Psoas muscle (tissue), 8 donors: ENCODE measurements at regions of chr12 and their contacts with region 1.

Region 1: DNA sequence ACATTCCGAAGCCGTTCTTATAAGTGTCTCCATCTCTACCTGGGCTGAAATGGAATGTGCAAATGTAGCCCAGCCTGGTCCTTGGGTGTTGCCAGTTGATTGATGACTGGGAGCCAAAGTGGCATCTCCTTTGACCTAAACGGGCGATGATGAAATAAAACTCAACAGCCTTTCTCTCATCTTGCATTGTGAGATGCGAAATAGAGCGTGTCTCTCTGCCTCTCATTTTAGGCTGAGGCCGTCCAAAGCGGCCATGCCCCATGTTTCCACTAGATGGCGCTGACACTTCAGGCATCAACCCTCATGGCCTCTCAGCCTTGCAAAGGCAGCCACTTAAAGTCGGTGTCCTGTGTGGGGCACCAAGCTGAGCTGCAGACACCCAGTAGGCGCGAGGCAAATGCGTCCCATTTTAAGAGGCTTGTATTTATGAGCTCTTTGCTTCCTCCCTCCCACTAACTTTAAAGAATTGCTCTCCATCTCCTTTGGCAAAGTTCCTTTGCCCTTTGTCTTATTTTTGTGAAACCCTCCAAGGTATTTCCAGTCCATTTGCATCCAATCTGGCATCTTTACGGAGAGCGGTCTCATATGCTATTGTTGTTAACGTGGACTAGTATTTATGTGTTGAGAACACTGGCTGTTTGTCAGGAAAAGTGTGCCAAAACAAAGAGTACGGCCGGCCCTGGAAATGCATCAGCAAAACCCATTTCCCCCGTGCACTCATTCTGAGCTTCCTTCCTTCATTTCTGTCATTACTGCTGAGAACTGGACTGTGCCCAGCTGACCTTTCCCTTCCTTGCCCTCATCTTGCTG is 25.0 kb downstream of the GPRC5A start:
- DNase-seq: peak; percentile 81 to 89
- ATAC-seq: peak; percentile 88 to 97 (median 90)
- H3K4me3 ChIP-seq: peak overlapping the region; percentile 8
- H3K27ac ChIP-seq: peak overlapping the region; percentile 30
- H3K4me1 ChIP-seq: no peaks in the 10 kb centered on the region
- H3K27me3 ChIP-seq: no peaks in the 10 kb centered on the region
- CTCF ChIP-seq: peak; percentile 99

Region 2: GRCh38 chr12:12725546-12726302 is 190.6 kb before region 1 on chr12:
- intact Hi-C with region 1: no loop called
- DNase-seq: peak; percentile 84 to 90
- ATAC-seq: peak; percentile 60 to 75 (median 64)
- H3K4me3 ChIP-seq: peak overlapping the region; percentile 84
- H3K27ac ChIP-seq: peak overlapping the region; percentile 93
- H3K4me1 ChIP-seq: peaks cover 27% of the 10 kb centered on the region
- H3K27me3 ChIP-seq: no peaks in the 10 kb centered on the region
- CTCF ChIP-seq: no peak

Region 3: DNA sequence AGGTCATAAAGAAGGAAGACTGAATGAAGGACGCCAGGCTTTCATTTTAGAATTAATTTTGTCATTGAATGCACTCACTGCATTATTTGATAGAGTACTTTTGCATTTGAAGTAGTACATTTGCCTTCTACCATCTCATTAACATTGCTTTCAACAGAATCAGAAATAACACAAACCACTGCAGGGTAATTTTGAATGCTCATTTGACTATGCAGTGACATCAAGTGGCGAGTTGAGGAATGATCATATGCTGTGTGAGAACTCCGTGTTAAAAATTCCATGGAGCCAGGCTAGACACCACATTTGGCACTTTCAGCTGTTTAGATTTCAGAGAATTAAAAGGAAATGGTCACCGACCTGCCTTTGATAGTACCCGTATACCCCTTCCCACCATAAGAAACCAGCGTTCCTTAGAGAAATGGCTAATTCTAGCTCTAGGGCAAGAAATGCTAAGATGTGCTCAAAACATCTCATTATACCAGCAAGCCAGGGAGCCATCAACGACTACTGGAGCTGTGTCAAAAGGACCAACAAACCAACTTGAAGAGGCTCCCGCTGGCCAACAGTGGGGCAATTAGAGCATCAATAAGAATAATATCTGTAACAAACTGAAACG is 67.2 kb after region 1 on chr12:
- intact Hi-C with region 1: loop called (anchors 1 to 2 kb)
- DNase-seq: no peak
- ATAC-seq: peak; percentile 59 to 88 (median 65)
- H3K4me3 ChIP-seq: no peak overlapping the region
- H3K27ac ChIP-seq: no peak overlapping the region
- H3K4me1 ChIP-seq: no peaks in the 10 kb centered on the region
- H3K27me3 ChIP-seq: no peaks in the 10 kb centered on the region
- CTCF ChIP-seq: peak; percentile 56

Region 4: DNA sequence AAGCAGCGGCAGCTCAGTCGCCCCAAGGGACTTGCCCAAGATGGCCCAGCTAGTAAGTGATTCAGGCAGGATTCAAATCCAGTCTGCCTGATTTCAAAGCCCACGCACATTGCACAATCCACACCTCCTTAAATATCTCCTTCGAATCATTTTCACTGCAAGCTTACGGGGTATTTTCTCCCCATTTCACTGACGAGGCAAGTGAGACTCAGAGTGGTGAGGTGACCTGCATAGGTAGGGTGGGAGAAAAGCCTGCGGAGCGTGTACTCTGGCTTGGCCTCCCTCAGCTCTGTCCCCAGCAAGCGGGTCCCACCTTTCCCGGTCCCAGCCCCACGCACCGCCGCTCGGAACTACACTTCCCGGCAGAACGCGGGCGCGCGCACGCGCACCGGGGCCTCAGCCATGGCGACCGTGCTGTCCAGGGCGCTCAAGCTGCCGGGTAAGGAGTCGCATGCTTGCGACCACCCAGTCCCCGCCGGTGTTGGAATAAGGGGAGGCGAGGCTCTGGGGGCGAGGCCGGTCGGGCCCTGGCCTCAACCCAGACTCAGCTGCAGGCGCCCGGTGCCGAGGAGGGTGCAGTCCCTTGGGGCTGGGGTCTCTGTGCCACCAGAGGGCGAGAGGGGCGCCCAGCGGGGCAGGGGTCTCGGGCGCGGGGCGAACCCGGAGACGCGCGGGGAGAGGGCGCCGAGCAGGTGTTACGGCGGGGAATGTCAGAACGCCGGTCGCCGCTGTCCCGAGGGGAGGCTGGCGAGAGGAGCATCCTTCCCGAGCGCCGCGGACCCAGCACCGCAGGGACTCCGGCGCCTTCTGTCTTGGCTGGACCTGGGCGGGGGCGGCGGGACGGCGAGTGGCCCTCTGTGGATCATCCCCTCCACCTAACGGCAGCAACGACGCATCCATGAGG is 127.9 kb after region 1 on chr12 and contains the start of gene FAM234B:
- intact Hi-C with region 1: loop called in 1 of 2 experiments (anchors 10 kb)
- DNase-seq: peak; percentile 87 to 90
- ATAC-seq: peak; percentile 94 to 100 (median 98)
- H3K4me3 ChIP-seq: peak within 1 kb of the TSS; percentile 100
- H3K27ac ChIP-seq: peak within 1 kb of the TSS; percentile 72
- H3K4me1 ChIP-seq: peaks cover 3% of the 10 kb centered on the region
- H3K27me3 ChIP-seq: no peaks in the 10 kb centered on the region
- CTCF ChIP-seq: peak; percentile 15
- total RNA-seq, gene FAM234B: 2.1 to 4.0 (median 2.5) TPM

Region 5: DNA sequence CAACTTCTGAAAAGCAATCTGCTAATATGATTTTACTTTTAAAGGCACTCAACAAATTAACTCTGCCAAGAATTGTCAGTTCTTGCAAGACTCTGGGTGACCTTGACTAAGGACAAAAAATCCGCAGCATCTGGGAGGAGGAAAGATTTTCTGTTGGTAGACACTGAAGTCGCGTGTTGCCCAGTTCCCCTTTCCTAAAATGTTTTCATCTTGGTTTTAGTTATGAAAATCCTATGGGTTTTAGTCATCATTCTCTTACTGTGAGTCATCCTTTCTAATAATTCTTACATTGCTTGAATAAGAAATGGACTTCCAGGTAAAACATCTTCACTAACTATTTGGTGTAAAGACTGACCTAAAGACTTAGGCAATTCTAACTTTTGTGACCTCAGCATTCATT is 178.0 kb after region 1 on chr12:
- intact Hi-C with region 1: loop called in 1 of 2 experiments (anchors 10 kb)
- DNase-seq: no peak
- ATAC-seq: no peak
- H3K4me3 ChIP-seq: no peak overlapping the region
- H3K27ac ChIP-seq: no peak overlapping the region
- H3K4me1 ChIP-seq: no peaks in the 10 kb centered on the region
- H3K27me3 ChIP-seq: no peaks in the 10 kb centered on the region
- CTCF ChIP-seq: no peak

Region 6: GRCh38 chr12:13233830-13234641 is 317.7 kb after region 1 on chr12:
- intact Hi-C with region 1: loop called in 1 of 2 experiments (anchors 2 kb)
- DNase-seq: no peak
- ATAC-seq: peak in 1 of 4 donors; percentile 24
- H3K4me3 ChIP-seq: no peak overlapping the region
- H3K27ac ChIP-seq: no peak overlapping the region
- H3K4me1 ChIP-seq: no peaks in the 10 kb centered on the region
- H3K27me3 ChIP-seq: peaks cover 0 to 2% (median 0%) of the 10 kb centered on the region in 3 donors
- CTCF ChIP-seq: peak; percentile 68